K562 (cell line): ENCODE measurements at regions of chr11 and their contacts with region 1.

Region 1: DNA sequence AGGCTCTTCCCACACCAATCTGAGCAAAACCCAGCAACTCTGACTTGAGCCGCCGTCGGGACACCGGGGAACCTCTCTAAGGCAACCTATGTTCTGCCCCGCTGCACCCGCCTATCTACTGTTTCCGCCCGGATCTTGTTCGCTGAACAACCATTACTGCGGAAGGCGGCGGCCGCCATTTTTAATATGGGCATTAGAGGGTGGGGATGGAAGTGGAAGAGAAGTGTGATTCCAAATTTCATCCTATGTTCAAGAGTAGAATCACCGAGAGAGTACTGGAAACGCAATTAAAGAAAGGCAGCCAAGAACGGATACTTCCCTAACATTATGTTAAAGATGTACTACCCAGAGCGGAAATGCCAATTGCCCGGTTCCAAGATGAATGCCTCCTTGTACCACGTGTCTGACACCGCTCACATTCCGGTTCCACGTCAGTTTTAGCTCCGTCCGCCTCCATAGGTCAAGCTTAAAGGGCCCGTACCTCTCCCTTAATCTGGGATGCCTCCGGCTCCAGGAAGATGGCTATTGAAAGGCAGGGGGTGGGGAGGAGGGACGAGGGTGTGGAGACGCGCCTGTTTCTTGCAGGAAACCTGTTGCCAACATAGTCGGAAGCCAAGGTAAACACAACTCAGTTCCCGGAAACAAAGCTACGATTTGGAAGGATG is at the start of gene DPAGT1:
- DNase-seq: peak; percentile 60 to 96 (median 74)
- ATAC-seq: peak; percentile 88
- H3K4me3 ChIP-seq: peak within 1 kb of the TSS; percentile 79
- H3K27ac ChIP-seq: peak within 1 kb of the TSS; percentile 99
- H3K4me1 ChIP-seq: peaks cover 36 to 39% of the 10 kb centered on the region in 2 experiments
- H3K27me3 ChIP-seq: no peaks in the 10 kb centered on the region
- CTCF ChIP-seq: no peak
- EP300 ChIP-seq: peak; percentile 38
- POLR2A ChIP-seq: peak; percentile 64
- RAD21 ChIP-seq: no peak
- polyA plus RNA-seq, gene DPAGT1: 91.1 to 135 TPM

Region 2: GRCh38 chr11:119018074-119018938 is 83.6 kb before region 1 on chr11 and contains the starts of genes RPS25 and TRAPPC4:
- CTCF ChIA-PET with region 1: no interaction called
- POLR2A ChIA-PET with region 1: interaction called, 5 read pairs
- in situ Hi-C with region 1: no loop called
- intact Hi-C with region 1: loop called (anchors 5 kb)
- DNase-seq: peak; percentile 84 to 97 (median 86)
- ATAC-seq: peak; percentile 91
- H3K4me3 ChIP-seq: peak within 1 kb of the TSS; percentile 99
- H3K27ac ChIP-seq: peak within 1 kb of the TSS; percentile 97
- H3K4me1 ChIP-seq: peaks cover 9 to 12% of the 10 kb centered on the region in 2 experiments; a peak in 4 of 5 replicates
- H3K27me3 ChIP-seq: no peaks in the 10 kb centered on the region
- CTCF ChIP-seq: no peak
- EP300 ChIP-seq: 0 out of 2 replicates have a peak, but pooled peaks have one; percentile 2
- POLR2A ChIP-seq: peak; percentile 98
- RAD21 ChIP-seq: no peak
- polyA plus RNA-seq, gene RPS25: 2,471 to 2,886 TPM
- polyA plus RNA-seq, gene TRAPPC4: 455 to 524 TPM

Region 3: GRCh38 chr11:119084663-119085436 is 17.0 kb before region 1 on chr11 and contains the start of gene HMBS:
- CTCF ChIA-PET with region 1: no interaction called
- POLR2A ChIA-PET with region 1: interaction called, 11 read pairs
- in situ Hi-C with region 1: no loop called
- intact Hi-C with region 1: no loop called
- DNase-seq: peak; percentile 86 to 98 (median 88)
- ATAC-seq: peak; percentile 82
- H3K4me3 ChIP-seq: peak within 1 kb of the TSS; percentile 79
- H3K27ac ChIP-seq: peak within 1 kb of the TSS; percentile 99
- H3K4me1 ChIP-seq: peaks cover 25 to 42% of the 10 kb centered on the region in 2 experiments; a peak in 4 of 5 replicates
- H3K27me3 ChIP-seq: no peaks in the 10 kb centered on the region
- CTCF ChIP-seq: no peak
- EP300 ChIP-seq: no peak
- POLR2A ChIP-seq: peak; percentile 92
- RAD21 ChIP-seq: 0 out of 4 replicates have a peak, but pooled peaks of 1 of the 2 experiments have one; percentile 6
- polyA plus RNA-seq, gene HMBS: 308 to 385 TPM

Region 4: DNA sequence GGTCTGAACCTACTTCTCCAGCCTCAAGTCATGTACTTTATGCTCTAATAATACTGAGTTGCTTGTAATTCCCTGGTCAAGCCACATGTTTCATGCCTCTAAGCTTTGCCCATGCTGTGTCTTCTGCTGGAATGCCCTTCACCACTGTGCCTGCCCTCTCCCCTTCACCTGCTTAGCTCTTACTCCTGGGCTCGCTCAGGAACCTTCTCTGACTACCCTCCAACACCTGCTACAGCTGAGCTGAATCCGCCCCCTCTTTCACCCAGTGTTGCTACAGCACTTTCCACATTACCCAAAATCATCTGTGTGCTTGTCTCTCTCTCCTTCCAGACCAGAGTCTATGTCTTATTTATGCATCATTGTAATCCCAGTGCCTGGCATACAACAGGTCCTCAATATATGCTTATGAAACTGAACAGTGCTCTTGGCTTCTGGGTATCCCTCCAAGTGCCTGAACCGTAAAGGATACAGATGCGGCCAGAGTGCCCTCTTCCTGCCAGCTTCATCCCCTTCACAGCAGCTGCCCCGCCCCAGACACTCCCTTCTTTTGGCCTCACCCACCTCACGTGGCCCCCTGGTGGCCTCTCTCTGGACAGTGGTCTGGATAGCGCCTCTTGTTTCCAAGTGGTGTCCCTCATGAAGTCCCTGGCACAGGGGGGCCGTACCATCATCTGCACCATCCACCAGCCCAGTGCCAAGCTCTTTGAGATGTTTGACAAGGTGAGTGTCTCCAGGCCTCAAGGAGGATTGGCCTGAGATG is 54.0 kb after region 1 on chr11:
- CTCF ChIA-PET with region 1: no interaction called
- POLR2A ChIA-PET with region 1: no interaction called
- in situ Hi-C with region 1: no loop called
- intact Hi-C with region 1: loop called (anchors 5 kb)
- DNase-seq: peak; percentile 70 to 75 (median 72)
- ATAC-seq: peak; percentile 90
- H3K4me3 ChIP-seq: no peak overlapping the region
- H3K27ac ChIP-seq: no peak overlapping the region
- H3K4me1 ChIP-seq: peaks cover 15 to 20% of the 10 kb centered on the region in 2 experiments; a peak in 4 of 5 replicates
- H3K27me3 ChIP-seq: peaks cover 3 to 32% of the 10 kb centered on the region in 2 experiments; a peak in 4 of 5 replicates
- CTCF ChIP-seq: peak; percentile 68 to 84 (median 71)
- EP300 ChIP-seq: no peak
- POLR2A ChIP-seq: no peak
- RAD21 ChIP-seq: peak in 1 of 2 experiments; percentile 42; a peak in 1 of 4 replicates

Region 5: DNA sequence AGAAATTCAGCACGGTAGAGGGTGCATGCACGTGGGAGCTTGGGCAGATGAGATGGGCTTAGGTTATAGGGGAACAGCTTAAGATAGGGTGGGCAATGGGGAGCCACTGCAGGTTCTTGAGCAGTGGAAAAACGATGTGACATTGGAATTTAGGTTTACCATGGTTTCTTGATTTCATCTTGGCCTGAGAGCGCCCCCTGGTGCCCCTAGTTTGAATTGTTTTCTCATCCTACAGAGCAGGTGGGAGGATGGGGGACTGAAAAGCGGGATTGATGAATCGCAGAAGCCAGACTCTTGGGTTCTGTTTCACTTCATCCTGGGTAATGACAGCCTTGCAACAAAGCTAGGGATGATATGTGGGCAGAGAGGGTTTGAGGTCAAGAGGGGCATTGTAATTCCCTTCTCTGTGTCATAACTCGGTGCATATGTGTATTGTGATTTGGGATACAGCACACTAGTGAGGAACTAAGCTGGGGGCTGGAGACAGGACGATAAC is 221.7 kb after region 1 on chr11:
- CTCF ChIA-PET with region 1: interaction called, 4 read pairs
- POLR2A ChIA-PET with region 1: interaction called, 4 read pairs
- in situ Hi-C with region 1: no loop called
- intact Hi-C with region 1: loop called (anchors 2 kb)
- DNase-seq: peak; percentile 56 to 86 (median 62)
- ATAC-seq: no peak
- H3K4me3 ChIP-seq: no peak overlapping the region
- H3K27ac ChIP-seq: no peak overlapping the region
- H3K4me1 ChIP-seq: peaks cover 27 to 40% of the 10 kb centered on the region in 2 experiments
- H3K27me3 ChIP-seq: no peaks in the 10 kb centered on the region; a peak in 1 of 5 replicates
- CTCF ChIP-seq: peak; percentile 83 to 94 (median 88)
- EP300 ChIP-seq: no peak; the same call in 1 of the 2 replicates
- POLR2A ChIP-seq: no peak
- RAD21 ChIP-seq: peak; percentile 57 to 81

Region 6: GRCh38 chr11:119533921-119534736 is 432.2 kb after region 1 on chr11:
- CTCF ChIA-PET with region 1: no interaction called
- POLR2A ChIA-PET with region 1: no interaction called
- in situ Hi-C with region 1: no loop called
- intact Hi-C with region 1: no loop called
- DNase-seq: peak; percentile 69 to 78 (median 76)
- ATAC-seq: peak; percentile 99
- H3K4me3 ChIP-seq: no peak overlapping the region
- H3K27ac ChIP-seq: no peak overlapping the region
- H3K4me1 ChIP-seq: peaks cover 0 to 5% of the 10 kb centered on the region in 2 experiments; a peak in 1 of 5 replicates
- H3K27me3 ChIP-seq: peaks cover 0 to 28% of the 10 kb centered on the region in 2 experiments; a peak in 4 of 5 replicates
- CTCF ChIP-seq: peak; percentile 78 to 97 (median 94)
- EP300 ChIP-seq: no peak
- POLR2A ChIP-seq: no peak
- RAD21 ChIP-seq: peak; percentile 73 to 83

Region 7: DNA sequence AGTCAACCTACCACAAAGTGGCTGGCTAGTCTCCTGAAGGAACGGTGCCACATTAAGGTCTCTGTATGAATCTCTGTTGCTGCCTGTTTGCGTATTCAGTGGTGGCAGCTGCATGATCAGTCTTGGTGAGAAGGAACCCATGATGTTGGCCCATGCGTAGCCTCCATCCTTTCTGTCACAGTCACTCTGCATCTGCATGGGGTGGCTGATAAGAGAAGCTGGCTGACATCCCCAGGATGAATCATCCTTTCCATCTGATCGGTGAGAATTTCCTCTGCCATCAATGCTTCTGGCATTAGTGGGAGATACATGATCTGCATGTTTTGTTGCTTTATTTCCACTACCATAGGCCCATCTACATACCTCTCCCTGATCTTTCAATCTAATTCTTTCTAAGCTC is 826.2 kb after region 1 on chr11:
- CTCF ChIA-PET with region 1: no interaction called
- POLR2A ChIA-PET with region 1: no interaction called
- in situ Hi-C with region 1: no loop called
- intact Hi-C with region 1: no loop called
- DNase-seq: peak; percentile 9 to 14 (median 12)
- ATAC-seq: no peak
- H3K4me3 ChIP-seq: no peak overlapping the region
- H3K27ac ChIP-seq: no peak overlapping the region
- H3K4me1 ChIP-seq: no peaks in the 10 kb centered on the region
- H3K27me3 ChIP-seq: peaks cover 0 to 2% of the 10 kb centered on the region in 2 experiments; a peak in 2 of 5 replicates
- CTCF ChIP-seq: no peak
- EP300 ChIP-seq: no peak
- POLR2A ChIP-seq: no peak
- RAD21 ChIP-seq: no peak